CD4-positive, alpha-beta memory T cell (primary cell): ENCODE measurements at regions of chr14 and their contacts with region 1.

Region 1: GRCh38 chr14:54396493-54397335 is at the start of gene CDKN3:
- DNase-seq: peak; percentile 97
- H3K4me3 ChIP-seq: peak within 1 kb of the TSS; percentile 69 to 73
- H3K4me3 Mint-ChIP-seq: peak within 1 kb of the TSS; percentile 87 to 92 (median 89)
- H3K27ac ChIP-seq: peak within 1 kb of the TSS; percentile 51
- H3K27ac Mint-ChIP-seq: peak within 1 kb of the TSS; percentile 57 to 96 (median 86)
- H3K4me1 ChIP-seq: peaks cover 18% of the 10 kb centered on the region
- H3K4me1 Mint-ChIP-seq: peaks cover 10 to 23% (median 15%) of the 10 kb centered on the region in 4 donors
- H3K27me3 ChIP-seq: no peaks in the 10 kb centered on the region
- H3K27me3 Mint-ChIP-seq: peaks cover under 1 to 3% of the 10 kb centered on the region in 2 donors
- total RNA-seq, gene CDKN3: 1.1 to 1.6 TPM

Region 2: DNA sequence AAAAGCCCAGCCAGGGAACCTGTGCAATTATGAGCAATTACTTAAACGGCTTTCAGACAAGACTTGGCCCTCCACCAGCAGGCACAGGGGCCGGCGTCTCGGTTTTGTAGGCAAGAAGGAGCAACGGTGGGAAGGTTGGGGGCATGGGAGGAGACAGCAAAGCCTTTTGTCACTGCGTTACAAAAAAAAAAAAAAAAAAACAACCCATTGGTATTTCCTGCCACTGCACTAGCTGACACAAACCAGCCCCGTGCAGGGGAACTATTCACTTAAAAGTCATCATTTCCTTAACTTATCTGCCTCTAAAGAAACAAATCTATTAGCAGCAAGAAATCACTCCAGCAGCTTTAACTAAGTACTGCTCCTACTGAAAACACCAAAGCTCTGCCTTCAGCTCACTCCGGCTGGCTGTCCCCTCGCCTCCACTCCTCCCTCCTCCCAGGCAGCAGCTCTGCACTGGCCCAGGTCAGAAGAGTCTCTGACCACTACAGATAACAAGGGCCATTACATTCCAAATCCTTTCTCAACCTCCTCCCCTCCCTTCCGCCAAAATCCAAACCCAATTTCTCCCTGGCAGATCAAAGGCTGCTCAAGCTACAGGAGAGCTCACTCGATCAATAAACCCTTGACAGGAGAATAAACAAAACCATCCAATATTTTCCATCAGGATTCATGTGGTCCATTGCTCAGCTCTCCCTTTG is 105.1 kb before region 1 on chr14:
- CTCF ChIA-PET with region 1: no interaction called
- POLR2A ChIA-PET with region 1: no interaction called
- intact Hi-C with region 1: no loop called
- DNase-seq: no peak
- H3K4me3 ChIP-seq: no peak overlapping the region
- H3K4me3 Mint-ChIP-seq: no peak overlapping the region
- H3K27ac ChIP-seq: no peak overlapping the region
- H3K27ac Mint-ChIP-seq: no peak overlapping the region
- H3K4me1 ChIP-seq: no peaks in the 10 kb centered on the region
- H3K4me1 Mint-ChIP-seq: no peaks in the 10 kb centered on the region
- H3K27me3 ChIP-seq: no peaks in the 10 kb centered on the region
- H3K27me3 Mint-ChIP-seq: peaks cover 9 to 14% of the 10 kb centered on the region in 2 donors

Region 3: GRCh38 chr14:54374117-54374884 is 22.4 kb before region 1 on chr14:
- CTCF ChIA-PET with region 1: no interaction called
- POLR2A ChIA-PET with region 1: no interaction called
- intact Hi-C with region 1: no loop called
- DNase-seq: no peak
- H3K4me3 ChIP-seq: no peak overlapping the region
- H3K4me3 Mint-ChIP-seq: no peak overlapping the region
- H3K27ac ChIP-seq: no peak overlapping the region
- H3K27ac Mint-ChIP-seq: no peak overlapping the region
- H3K4me1 ChIP-seq: no peaks in the 10 kb centered on the region
- H3K4me1 Mint-ChIP-seq: no peaks in the 10 kb centered on the region
- H3K27me3 ChIP-seq: peaks cover 5% of the 10 kb centered on the region
- H3K27me3 Mint-ChIP-seq: peaks cover 2 to 10% of the 10 kb centered on the region in 2 donors

Region 4: GRCh38 chr14:54488646-54489317 is 92.1 kb after region 1 on chr14 and contains the start of gene GMFB:
- CTCF ChIA-PET with region 1: no interaction called
- POLR2A ChIA-PET with region 1: interaction called, 4 read pairs
- intact Hi-C with region 1: loop called (anchors 2 kb)
- DNase-seq: peak; percentile 84 to 88 (median 87)
- H3K4me3 ChIP-seq: peak within 1 kb of the TSS; percentile 50 to 66
- H3K4me3 Mint-ChIP-seq: peak within 1 kb of the TSS; percentile 85 to 97 (median 94)
- H3K27ac ChIP-seq: peak within 1 kb of the TSS; percentile 80
- H3K27ac Mint-ChIP-seq: peak within 1 kb of the TSS; percentile 89 to 99 (median 97)
- H3K4me1 ChIP-seq: peaks cover 57% of the 10 kb centered on the region
- H3K4me1 Mint-ChIP-seq: peaks cover 48 to 70% (median 57%) of the 10 kb centered on the region in 4 donors
- H3K27me3 ChIP-seq: no peaks in the 10 kb centered on the region
- H3K27me3 Mint-ChIP-seq: no peaks in the 10 kb centered on the region
- total RNA-seq, gene GMFB: 31.1 to 36.4 TPM

Region 5: DNA sequence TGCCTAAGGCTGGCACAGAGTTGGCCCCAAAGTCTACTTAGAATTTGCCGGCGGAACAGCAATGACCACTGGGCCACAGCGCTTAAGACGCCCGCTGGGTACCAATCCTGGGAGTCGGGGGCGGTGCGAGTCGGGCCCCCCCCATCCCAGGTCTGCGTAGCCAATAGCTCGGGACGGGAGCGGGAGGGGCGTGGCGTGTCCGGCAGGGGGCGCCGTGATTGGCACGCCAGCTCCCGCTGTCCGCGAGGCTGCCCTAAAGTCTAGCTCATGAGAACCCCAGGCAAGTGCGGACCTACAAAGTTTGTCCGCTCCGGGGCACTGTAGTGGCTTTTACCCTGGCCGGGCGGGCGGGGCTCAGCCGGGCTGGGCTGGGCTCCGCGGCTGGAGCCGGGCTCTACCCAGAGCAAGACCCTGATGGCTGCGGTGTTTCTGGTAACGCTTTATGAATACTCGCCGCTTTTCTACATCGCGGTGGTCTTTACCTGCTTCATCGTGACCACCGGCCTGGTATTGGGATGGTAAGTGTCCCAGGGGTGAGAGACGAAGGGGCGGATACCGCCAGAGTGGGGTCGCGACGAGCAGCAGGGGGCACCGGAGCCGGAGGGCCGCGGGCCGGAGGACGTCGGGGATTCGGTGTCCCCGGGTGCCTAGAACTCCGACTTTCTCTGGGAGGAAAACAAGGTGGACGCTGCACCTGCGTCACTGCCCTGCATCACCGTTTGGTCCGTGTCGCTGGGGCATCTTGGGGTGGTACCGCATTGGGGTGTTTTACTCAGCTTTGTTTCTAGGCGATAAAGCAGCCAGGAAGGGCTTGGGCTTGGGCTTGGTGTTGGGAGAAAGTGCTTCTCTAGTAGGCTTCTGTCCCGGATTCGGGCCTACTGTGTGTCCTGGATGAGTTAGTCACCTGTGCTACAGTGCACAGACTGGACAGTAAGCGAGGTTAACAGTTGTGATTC is 113.1 kb after region 1 on chr14 and contains the start of gene CGRRF1:
- CTCF ChIA-PET with region 1: interaction called, 4 read pairs
- POLR2A ChIA-PET with region 1: interaction called, 4 read pairs
- intact Hi-C with region 1: loop called (anchors 1 kb)
- DNase-seq: peak; percentile 93 to 95 (median 93)
- H3K4me3 ChIP-seq: peak within 1 kb of the TSS; percentile 86 to 87
- H3K4me3 Mint-ChIP-seq: peak within 1 kb of the TSS; percentile 93 to 99 (median 97)
- H3K27ac ChIP-seq: peak within 1 kb of the TSS; percentile 77
- H3K27ac Mint-ChIP-seq: peak within 1 kb of the TSS; percentile 84 to 97 (median 96)
- H3K4me1 ChIP-seq: peaks cover 41% of the 10 kb centered on the region
- H3K4me1 Mint-ChIP-seq: peaks cover 46 to 61% (median 50%) of the 10 kb centered on the region in 4 donors
- H3K27me3 ChIP-seq: no peaks in the 10 kb centered on the region
- H3K27me3 Mint-ChIP-seq: no peaks in the 10 kb centered on the region
- total RNA-seq, gene CGRRF1: 21.8 to 23.8 TPM

Region 6: GRCh38 chr14:54627540-54628363 is 231.0 kb after region 1 on chr14:
- CTCF ChIA-PET with region 1: no interaction called
- POLR2A ChIA-PET with region 1: no interaction called
- intact Hi-C with region 1: no loop called
- DNase-seq: peak; percentile 44 to 70 (median 61)
- H3K4me3 ChIP-seq: peak overlapping the region; percentile 5 to 47
- H3K4me3 Mint-ChIP-seq: peak overlapping the region; percentile 65 to 86 (median 83)
- H3K27ac ChIP-seq: peak overlapping the region; percentile 67
- H3K27ac Mint-ChIP-seq: peak overlapping the region; percentile 87 to 96 (median 93)
- H3K4me1 ChIP-seq: peaks cover 48% of the 10 kb centered on the region
- H3K4me1 Mint-ChIP-seq: peaks cover 32 to 60% (median 47%) of the 10 kb centered on the region in 4 donors
- H3K27me3 ChIP-seq: no peaks in the 10 kb centered on the region
- H3K27me3 Mint-ChIP-seq: no peaks in the 10 kb centered on the region

Region 7: DNA sequence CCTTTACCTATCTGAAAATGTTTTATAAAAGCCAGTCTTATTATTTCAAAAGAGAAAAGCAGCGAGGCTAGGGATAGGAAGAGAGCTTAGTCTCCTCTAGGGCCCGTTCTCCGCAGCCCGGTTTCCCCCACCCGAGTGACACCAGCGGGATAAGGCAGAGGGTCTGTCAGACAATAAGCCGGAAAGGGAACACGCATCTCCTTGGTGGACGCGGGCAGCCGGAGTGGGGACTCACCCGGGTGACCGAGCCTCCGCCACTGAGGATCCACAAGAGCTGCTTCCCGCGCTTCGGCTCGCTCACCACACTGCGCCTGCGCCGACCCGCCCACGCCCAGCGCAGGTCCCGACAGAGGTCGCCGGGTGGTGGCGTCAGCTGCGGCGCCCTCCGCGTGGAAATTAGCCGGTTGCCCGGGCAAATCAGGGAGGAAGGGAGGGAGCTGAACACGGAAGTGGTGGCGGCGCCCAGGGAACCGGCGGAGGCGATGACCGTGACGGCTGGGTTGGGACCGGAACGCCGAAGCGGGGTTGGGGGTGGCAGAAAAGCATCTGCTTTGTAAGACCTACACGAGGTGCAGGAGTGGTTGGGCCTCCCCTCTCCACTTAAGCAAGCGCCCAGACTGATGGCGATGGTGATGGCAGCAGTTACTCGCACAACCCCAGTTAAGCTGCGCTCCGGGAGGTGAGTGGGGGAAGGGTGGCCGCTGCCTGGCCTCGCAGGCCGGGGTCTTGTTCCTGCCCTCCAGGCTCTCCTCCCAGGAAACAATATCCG is 630.3 kb after region 1 on chr14 and contains the starts of genes SOCS4 and WDHD1:
- CTCF ChIA-PET with region 1: no interaction called
- POLR2A ChIA-PET with region 1: no interaction called
- intact Hi-C with region 1: loop called (anchors 1 kb)
- DNase-seq: peak; percentile 96 to 98 (median 97)
- H3K4me3 ChIP-seq: peak within 1 kb of the TSS; percentile 70 to 87
- H3K4me3 Mint-ChIP-seq: peak within 1 kb of the TSS; percentile 87 to 95 (median 94)
- H3K27ac ChIP-seq: peak within 1 kb of the TSS; percentile 89
- H3K27ac Mint-ChIP-seq: peak within 1 kb of the TSS; percentile 87 to 98 (median 96)
- H3K4me1 ChIP-seq: peaks cover 47% of the 10 kb centered on the region
- H3K4me1 Mint-ChIP-seq: peaks cover 37 to 56% (median 44%) of the 10 kb centered on the region in 4 donors
- H3K27me3 ChIP-seq: no peaks in the 10 kb centered on the region
- H3K27me3 Mint-ChIP-seq: no peaks in the 10 kb centered on the region
- total RNA-seq, gene SOCS4: 19.2 to 24.5 TPM
- total RNA-seq, gene WDHD1: 4.0 to 4.1 TPM